ENCODE measurements at regions of chr12 and their contacts with region 1.

Region 1: GRCh38 chr12:3743803-3744202 is 9.1 kb downstream of the CRACR2A start:
- DNase-seq: peak; percentile 66
- H3K4me3 Mint-ChIP-seq: no peak overlapping the region
- H3K27ac Mint-ChIP-seq: peak overlapping the region; percentile 48
- H3K4me1 Mint-ChIP-seq: peaks cover 41% of the 10 kb centered on the region
- H3K27me3 Mint-ChIP-seq: no peaks in the 10 kb centered on the region

Region 2: DNA sequence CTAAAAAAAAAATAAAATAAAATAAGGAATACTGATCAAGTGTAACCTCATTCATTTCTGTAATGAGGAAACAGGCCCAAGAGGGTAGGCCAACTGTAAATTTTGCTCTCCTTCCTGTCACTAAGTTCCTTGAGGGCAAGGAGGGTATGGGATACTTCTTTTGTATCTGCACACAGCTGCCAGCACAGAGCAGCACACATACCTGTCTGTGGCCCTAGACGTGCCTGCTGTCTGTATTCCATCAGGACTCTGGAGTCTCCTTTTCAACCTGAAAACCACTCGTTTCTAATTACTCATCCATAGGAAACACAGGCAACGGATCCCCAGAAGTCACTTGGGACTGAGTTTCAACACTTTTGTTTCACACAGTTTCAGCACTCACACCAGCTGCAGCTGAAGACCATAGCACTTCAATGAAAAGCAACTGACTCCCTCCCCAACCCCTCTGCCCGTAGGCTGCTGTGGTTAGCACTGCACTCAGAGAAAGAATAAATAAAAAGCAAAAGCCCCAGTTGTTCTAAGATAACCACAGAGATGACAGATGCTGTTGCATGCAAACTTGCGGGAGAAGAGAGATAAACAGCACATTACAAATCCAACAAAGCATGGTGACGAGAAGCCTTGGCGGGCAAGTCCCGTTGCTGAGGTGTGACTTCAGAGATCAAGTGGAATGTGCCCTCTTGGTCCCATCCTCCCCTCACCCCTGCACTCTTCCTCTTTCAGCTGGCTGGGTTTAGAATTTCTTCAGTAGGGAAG is 15.7 kb before region 1 on chr12:
- intact Hi-C with region 1: loop called (anchors 1 kb)
- DNase-seq: peak; percentile 88
- H3K4me3 Mint-ChIP-seq: peak overlapping the region; percentile 82
- H3K27ac Mint-ChIP-seq: peak overlapping the region; percentile 93
- H3K4me1 Mint-ChIP-seq: peaks cover 35% of the 10 kb centered on the region
- H3K27me3 Mint-ChIP-seq: no peaks in the 10 kb centered on the region

Region 3: DNA sequence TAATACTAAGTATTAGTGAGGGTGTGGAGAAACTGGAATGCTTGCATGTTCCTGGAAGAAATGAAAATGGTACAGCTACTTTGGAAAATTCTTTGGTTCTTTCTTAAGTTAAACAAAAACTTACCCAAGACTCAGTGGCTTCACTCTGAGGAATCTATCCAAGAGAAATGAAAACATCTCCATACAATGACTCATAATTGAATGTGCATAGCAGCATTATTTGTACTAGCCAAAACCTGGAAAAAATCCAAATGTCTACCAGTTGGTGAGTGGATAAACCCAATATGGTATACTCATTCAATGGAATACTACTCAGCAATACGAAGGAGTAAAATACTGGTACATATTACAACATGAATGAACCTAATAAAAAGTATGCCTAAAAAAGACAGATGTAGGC is 27.1 kb after region 1 on chr12:
- intact Hi-C with region 1: no loop called
- DNase-seq: no peak
- H3K4me3 Mint-ChIP-seq: no peak overlapping the region
- H3K27ac Mint-ChIP-seq: no peak overlapping the region
- H3K4me1 Mint-ChIP-seq: peaks cover 11% of the 10 kb centered on the region
- H3K27me3 Mint-ChIP-seq: no peaks in the 10 kb centered on the region